ENCODE measurements at regions of chr5 and their contacts with region 1.

Region 1: GRCh38 chr5:1167728-1168709 is 33.4 kb upstream of the SLC6A19 start:
- DNase-seq: peak in 9 of 10 donors; percentile 52 to 96 (median 76)

Region 2: GRCh38 chr5:923281-923873 is 244.6 kb before region 1 on chr5:
- intact Hi-C with region 1: loop called (anchors 10 kb)
- DNase-seq: peak in 7 of 10 donors; percentile 62 to 94 (median 66)

Region 3: GRCh38 chr5:1235379-1235778 is 67.4 kb after region 1 on chr5:
- intact Hi-C with region 1: loop called (anchors 5 kb)
- DNase-seq: peak in 1 of 10 donors; percentile 23

Region 4: DNA sequence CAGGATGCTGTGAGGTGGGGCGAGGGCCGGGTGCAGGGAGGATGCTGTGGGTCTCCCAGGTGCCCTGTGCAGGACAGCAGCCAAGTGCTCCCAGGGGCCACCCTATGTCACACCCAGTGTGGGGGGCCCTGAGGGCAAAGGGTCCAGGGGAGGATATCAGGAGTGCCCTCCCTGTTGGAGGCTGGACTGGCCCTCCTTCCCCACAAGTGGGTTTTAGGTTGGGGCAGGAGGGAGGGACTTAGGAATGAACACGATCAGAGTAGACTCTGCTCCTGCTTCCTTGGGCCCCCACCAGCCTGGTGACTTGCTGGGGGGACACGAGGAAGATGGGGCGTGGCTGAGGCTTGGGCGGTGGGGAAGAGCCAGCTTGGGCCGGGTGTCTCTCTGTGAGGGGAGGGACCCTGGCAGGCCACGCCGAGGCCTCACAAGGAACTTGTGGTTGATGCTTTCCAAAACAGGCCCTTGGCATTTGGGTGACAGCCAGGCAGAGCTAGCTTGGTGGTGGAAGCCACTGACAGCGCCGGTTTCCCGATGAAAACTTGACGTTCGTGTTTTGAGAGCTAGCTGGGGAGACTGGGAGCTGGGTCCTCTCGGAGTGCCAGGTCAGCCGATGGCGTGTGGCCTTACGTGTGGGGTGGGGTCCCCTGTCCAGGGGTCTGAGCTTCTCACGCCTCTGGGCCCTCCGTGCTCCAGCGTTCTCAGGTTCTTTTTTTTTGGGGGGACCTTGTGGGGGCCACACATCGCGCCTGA is 484.8 kb after region 1 on chr5:
- intact Hi-C with region 1: no loop called
- DNase-seq: peak in 3 of 10 donors; percentile 19 to 82 (median 62)